ENCODE measurements at regions of chrX and their contacts with region 1.

Region 1: GRCh38 chrX:14029425-14030173 is at the start of gene GEMIN8:
- DNase-seq: peak; percentile 88
- ATAC-seq: peak; percentile 73
- H3K4me3 ChIP-seq: peak within 1 kb of the TSS; percentile 77
- H3K27ac ChIP-seq: peak within 1 kb of the TSS; percentile 98
- H3K4me1 ChIP-seq: peaks cover 46% of the 10 kb centered on the region
- H3K27me3 ChIP-seq: no peaks in the 10 kb centered on the region
- CTCF ChIP-seq: no peak
- total RNA-seq, gene GEMIN8: 6.3 and 8.3 TPM in 2 replicates

Region 2: DNA sequence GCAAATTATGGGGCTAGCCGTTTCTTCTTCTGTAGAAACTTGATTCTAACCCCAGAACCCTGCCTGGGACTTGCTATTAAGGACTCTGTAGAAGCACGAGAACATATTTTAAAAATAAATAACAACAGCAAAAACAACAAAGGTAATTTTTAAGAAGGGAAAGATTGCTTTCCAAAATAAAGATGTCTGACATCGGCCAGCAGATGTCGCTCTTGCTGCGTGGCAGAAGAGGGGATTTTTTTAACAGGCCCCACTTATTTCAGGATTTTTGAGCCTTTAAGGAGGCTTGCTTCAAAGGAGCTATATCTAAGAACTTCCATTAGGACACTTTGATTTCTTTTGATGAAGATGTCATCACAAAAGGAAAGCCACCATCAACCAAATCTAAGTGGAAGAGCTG is 523.0 kb before region 1 on chrX:
- CTCF ChIA-PET with region 1: no interaction called
- POLR2A ChIA-PET with region 1: no interaction called
- intact Hi-C with region 1: loop called (anchors 1 kb)
- DNase-seq: peak; percentile 62
- ATAC-seq: no peak
- H3K4me3 ChIP-seq: no peak overlapping the region
- H3K27ac ChIP-seq: no peak overlapping the region
- H3K4me1 ChIP-seq: no peaks in the 10 kb centered on the region
- H3K27me3 ChIP-seq: no peaks in the 10 kb centered on the region
- CTCF ChIP-seq: peak; percentile 76

Region 3: GRCh38 chrX:13552892-13553291 is 476.7 kb before region 1 on chrX:
- CTCF ChIA-PET with region 1: no interaction called
- POLR2A ChIA-PET with region 1: no interaction called
- intact Hi-C with region 1: no loop called
- DNase-seq: no peak
- ATAC-seq: no peak
- H3K4me3 ChIP-seq: no peak overlapping the region
- H3K27ac ChIP-seq: no peak overlapping the region
- H3K4me1 ChIP-seq: no peaks in the 10 kb centered on the region
- H3K27me3 ChIP-seq: peaks cover 8% of the 10 kb centered on the region; the same call in 1 of the 2 replicates
- CTCF ChIP-seq: no peak

Region 4: GRCh38 chrX:13658602-13659001 is 371.0 kb before region 1 on chrX:
- CTCF ChIA-PET with region 1: no interaction called
- POLR2A ChIA-PET with region 1: no interaction called
- intact Hi-C with region 1: loop called (anchors 1 kb)
- DNase-seq: peak; percentile 75
- ATAC-seq: peak; percentile 59; the same call in 1 of the 2 replicates
- H3K4me3 ChIP-seq: peak overlapping the region; percentile 43; the same call in 1 of the 2 replicates
- H3K27ac ChIP-seq: 0 out of 2 replicates have a peak overlapping the region, but pooled peaks have one; percentile 2
- H3K4me1 ChIP-seq: peaks cover 17% of the 10 kb centered on the region
- H3K27me3 ChIP-seq: no peaks in the 10 kb centered on the region
- CTCF ChIP-seq: peak; percentile 84

Region 5: DNA sequence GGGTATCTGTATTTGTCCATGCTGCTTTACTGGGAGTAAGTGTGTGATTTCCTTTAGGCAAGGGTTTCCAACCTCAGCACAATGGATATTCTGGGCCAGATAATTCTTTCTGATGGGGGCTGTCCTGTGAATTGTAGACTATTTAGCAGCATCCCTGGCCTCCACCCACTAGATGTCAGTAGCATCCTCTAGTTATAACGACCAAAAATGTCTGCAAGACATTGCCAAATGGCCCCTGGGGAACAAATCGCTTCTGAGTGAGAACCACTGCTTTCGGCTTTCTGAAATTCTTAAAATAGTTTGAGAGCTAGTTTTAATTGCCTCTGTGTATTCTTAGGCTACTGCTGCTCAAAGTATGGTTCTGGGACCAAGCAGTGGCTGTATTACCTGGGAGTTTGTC is 131.5 kb before region 1 on chrX:
- CTCF ChIA-PET with region 1: no interaction called
- POLR2A ChIA-PET with region 1: interaction called, 3 read pairs
- intact Hi-C with region 1: loop called (anchors 1 kb)
- DNase-seq: peak; percentile 44
- ATAC-seq: no peak; the same call in 1 of the 2 replicates
- H3K4me3 ChIP-seq: no peak overlapping the region
- H3K27ac ChIP-seq: peak overlapping the region; percentile 90
- H3K4me1 ChIP-seq: peaks cover 29% of the 10 kb centered on the region
- H3K27me3 ChIP-seq: no peaks in the 10 kb centered on the region
- CTCF ChIP-seq: peak; percentile 63

Region 6: GRCh38 chrX:13932416-13932815 is 97.2 kb before region 1 on chrX:
- CTCF ChIA-PET with region 1: no interaction called
- POLR2A ChIA-PET with region 1: no interaction called
- intact Hi-C with region 1: loop called (anchors 5 kb)
- DNase-seq: no peak
- ATAC-seq: no peak
- H3K4me3 ChIP-seq: no peak overlapping the region
- H3K27ac ChIP-seq: no peak overlapping the region
- H3K4me1 ChIP-seq: peaks cover 19% of the 10 kb centered on the region
- H3K27me3 ChIP-seq: no peaks in the 10 kb centered on the region
- CTCF ChIP-seq: no peak

Measured in PC-3 (cell line).